ENCODE measurements at regions of chr16 and their contacts with region 1.

Region 1: GRCh38 chr16:70438969-70439862 is at the start of gene ST3GAL2:
- DNase-seq: peak; percentile 98
- H3K4me3 ChIP-seq: peak within 1 kb of the TSS; percentile 73 to 78
- H3K27ac ChIP-seq: peak within 1 kb of the TSS; percentile 90
- H3K4me1 ChIP-seq: peaks cover 9 to 29% of the 10 kb centered on the region in 2 experiments; a peak in 3 of 4 replicates
- H3K27me3 ChIP-seq: no peaks in the 10 kb centered on the region
- CTCF ChIP-seq: no peak
- EP300 ChIP-seq: peak in 1 of 2 experiments; percentile 67; a peak in 1 of 4 replicates
- RAD21 ChIP-seq: no peak
- polyA plus RNA-seq, gene ST3GAL2: 11.4 and 19.9 TPM in 2 replicates

Region 2: DNA sequence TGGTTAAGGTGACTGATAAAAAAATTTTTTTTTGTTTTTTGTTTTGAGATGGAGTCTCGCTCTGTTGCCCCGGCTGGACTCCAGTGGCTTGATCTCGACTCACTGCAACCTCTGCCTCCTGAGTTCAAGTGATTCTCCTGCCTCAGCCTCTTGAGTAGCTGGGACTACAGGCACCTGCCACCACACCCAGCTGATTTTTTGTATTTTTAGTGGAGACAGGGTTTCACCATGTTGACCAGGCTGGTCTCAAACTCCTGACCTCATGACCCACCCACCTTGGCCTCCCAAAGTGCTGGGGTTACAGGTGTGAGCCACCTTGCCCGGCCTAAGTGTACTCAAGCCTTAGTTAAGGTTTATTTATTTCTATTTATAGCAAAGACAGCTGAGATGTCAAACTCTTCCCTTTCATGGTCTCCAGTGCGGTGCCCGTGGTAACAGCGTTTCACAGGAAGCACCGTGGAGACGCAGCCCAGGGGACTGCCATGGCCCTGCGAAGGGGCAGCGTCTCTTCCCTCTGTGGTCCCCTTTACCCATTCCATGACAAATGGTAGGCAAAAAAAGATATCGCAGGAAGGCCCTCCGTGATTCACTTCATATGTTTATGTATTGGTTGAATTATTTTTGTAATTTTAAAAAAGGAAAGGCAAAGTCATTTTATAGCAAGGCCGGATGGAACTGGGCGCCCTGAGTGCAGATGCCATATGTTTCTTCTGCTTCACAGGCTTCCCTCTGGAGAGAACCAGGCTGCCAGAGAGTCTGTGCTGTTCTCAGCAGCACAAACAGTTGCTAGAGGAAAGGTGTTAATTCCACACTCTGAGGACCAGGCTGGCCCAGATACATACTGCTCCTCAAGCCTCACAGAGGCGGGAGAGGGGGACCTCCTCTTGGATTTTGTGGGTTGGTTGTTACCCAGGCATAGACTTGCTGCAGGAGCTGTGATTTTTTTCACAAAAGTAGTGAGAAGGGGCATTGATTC is 63.3 kb before region 1 on chr16:
- CTCF ChIA-PET with region 1: interaction called, 10 read pairs
- POLR2A ChIA-PET with region 1: interaction called, 22 read pairs
- DNase-seq: no peak
- H3K4me3 ChIP-seq: no peak overlapping the region
- H3K27ac ChIP-seq: peak overlapping the region in 1 of 2 experiments; percentile 23; a peak in 3 of 4 replicates
- H3K4me1 ChIP-seq: peaks cover 6 to 8% of the 10 kb centered on the region in 2 experiments; a peak in 2 of 4 replicates
- H3K27me3 ChIP-seq: no peaks in the 10 kb centered on the region
- CTCF ChIP-seq: no peak
- EP300 ChIP-seq: no peak
- RAD21 ChIP-seq: no peak

Region 3: GRCh38 chr16:70380861-70381603 is 58.2 kb before region 1 on chr16:
- CTCF ChIA-PET with region 1: interaction called, 10 read pairs
- POLR2A ChIA-PET with region 1: interaction called, 22 read pairs
- DNase-seq: peak; percentile 97
- H3K4me3 ChIP-seq: peak overlapping the region; percentile 65 to 72
- H3K27ac ChIP-seq: peak overlapping the region; percentile 77 to 85
- H3K4me1 ChIP-seq: peaks cover 6 to 8% of the 10 kb centered on the region in 2 experiments; a peak in 2 of 4 replicates
- H3K27me3 ChIP-seq: no peaks in the 10 kb centered on the region
- CTCF ChIP-seq: peak; percentile 49
- EP300 ChIP-seq: no peak
- RAD21 ChIP-seq: no peak

Region 4: DNA sequence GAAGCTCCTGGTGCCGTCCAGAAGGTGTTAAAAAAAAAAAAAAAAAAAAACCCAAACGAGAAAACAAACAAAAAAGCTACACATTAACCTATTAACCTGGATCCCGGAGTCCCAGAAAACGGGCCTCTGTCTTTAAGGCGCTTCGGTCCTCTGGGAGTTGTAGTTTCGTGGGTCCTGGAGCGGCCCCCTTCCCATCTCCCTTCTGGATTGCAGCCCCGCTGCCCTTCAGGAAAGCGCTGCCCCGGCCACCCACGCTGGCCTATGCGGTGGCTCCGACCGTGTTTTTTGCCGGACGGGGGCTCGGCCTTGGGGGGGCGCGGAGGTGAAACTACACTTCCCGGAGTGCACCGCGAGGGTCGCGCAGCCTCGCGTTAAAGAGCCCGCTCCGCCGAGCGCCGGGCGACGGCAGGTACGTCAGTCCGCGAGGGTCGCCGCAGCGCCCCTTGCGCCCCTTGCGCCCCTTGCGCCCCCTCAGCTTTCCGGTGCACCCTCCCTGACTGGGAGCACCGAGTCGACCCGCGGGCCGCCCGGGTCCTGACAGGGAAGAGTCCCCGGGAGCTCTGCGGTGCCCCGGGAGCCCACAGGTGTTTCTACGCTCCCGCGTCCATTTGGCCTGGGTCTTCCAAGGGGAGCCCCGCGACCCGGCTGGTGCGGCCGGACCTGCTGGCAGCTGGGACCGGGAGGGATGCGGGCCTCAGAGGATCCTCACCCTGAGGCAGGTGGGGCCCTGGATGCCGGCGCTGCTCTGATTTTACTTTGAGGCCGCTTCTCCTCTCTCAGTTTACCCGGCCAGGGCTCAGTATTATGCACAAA is 15.2 kb after region 1 on chr16 and contains the start of gene FCSK:
- CTCF ChIA-PET with region 1: interaction called, 14 read pairs
- POLR2A ChIA-PET with region 1: interaction called, 5 read pairs
- DNase-seq: peak; percentile 91
- H3K4me3 ChIP-seq: peak within 1 kb of the TSS; percentile 79 to 99
- H3K27ac ChIP-seq: peak within 1 kb of the TSS; percentile 88 to 96
- H3K4me1 ChIP-seq: peaks cover 0 to 3% of the 10 kb centered on the region in 2 experiments; a peak in 1 of 4 replicates
- H3K27me3 ChIP-seq: no peaks in the 10 kb centered on the region
- CTCF ChIP-seq: no peak
- EP300 ChIP-seq: no peak
- RAD21 ChIP-seq: peak; percentile 17
- polyA plus RNA-seq, gene FCSK: 9.7 and 10.4 TPM in 2 replicates